Lower leg skin (tissue), 4 donors: ENCODE measurements at regions of chr1 and their contacts with region 1.

Region 1: DNA sequence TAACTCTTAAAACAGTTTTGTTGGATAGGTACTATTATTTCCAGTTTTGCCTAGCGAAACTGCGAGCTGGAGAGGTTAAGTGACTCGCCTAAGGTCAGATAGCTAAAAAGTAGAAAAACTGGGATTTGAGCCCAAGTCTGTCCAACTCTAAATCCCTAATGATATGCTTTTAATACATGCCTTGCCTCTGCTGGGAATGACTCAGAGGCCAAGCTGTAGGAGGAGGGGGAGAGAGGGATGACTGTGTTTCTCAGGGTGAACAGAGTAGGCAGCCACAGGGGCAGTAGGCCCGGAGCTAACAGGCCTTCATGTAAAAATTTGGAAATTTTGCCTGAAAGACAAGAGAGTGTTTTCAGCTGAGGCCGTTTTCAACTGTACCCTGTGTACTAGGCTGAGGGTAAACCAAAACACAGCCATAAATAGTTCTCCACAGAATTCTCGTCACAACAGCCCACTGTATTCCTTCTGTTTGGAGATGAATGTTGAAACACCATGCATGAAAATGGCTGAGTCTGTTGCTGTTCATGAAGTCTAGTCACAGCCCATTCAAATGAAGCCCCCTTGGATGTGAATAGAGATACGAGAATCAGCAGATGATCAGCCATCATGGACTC is 107.5 kb upstream of the HOOK1 start:
- DNase-seq: no peak
- H3K4me3 ChIP-seq: no peak overlapping the region
- CTCF ChIP-seq: no peak
- POLR2A ChIP-seq: no peak

Region 2: DNA sequence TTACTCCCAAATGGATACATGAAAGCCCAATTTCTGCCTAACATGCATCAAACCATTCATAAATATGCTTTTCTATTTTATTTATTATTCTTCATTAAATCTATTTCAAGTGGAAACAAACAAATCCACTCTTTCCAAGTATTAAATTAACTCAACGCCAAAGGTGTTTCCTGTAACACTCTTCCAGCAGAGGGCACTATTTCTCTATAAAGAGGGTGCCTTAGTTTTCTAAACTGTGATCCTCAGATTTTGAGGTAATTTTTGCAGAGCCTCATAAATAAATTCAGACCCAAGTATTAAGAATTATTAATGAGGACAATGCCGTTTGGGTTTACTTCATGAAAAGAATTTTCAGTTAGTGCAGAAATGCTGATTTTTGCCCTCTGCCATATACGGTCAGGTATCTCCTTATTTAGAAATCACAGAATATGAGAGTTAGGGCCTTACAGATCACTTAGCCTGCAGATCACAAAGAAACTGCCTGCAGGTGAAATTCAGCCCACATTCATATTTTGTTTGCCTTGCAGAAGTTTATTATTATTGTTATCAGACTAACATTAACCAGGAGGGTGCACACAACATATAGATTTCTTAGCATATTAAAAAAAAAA is 967.3 kb before region 1 on chr1:
- intact Hi-C with region 1: loop called (anchors 10 kb)
- DNase-seq: no peak
- H3K4me3 ChIP-seq: no peak overlapping the region
- CTCF ChIP-seq: peak in 1 of 3 donors; percentile 39
- POLR2A ChIP-seq: no peak